Mammary epithelial cell (primary cell): ENCODE measurements at regions of chr7 and their contacts with region 1.

Region 1: DNA sequence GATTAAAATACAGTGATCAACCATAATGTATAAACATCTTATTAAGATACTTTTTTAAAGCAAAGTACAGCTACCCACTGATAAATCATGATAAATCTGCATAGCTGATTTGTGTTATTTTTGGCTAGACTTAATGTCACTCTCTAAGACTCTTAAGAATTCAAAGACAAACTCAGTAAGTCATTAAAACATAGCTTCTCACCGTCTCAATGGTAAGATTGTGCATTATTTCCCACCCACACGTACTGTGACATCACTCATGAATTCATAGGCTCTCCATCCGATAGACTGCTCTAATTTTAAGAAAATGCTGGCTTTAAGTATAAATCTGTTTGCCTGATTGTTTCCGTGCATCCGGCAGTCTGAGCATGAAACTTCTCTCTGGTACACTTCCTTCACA is 266.1 kb downstream of the GLI3 start:
- DNase-seq: no peak
- H3K4me3 ChIP-seq: no peak overlapping the region
- H3K27ac ChIP-seq: no peak overlapping the region
- H3K4me1 ChIP-seq: peaks cover 6% of the 10 kb centered on the region
- H3K27me3 ChIP-seq: no peaks in the 10 kb centered on the region
- CTCF ChIP-seq: no peak

Region 2: DNA sequence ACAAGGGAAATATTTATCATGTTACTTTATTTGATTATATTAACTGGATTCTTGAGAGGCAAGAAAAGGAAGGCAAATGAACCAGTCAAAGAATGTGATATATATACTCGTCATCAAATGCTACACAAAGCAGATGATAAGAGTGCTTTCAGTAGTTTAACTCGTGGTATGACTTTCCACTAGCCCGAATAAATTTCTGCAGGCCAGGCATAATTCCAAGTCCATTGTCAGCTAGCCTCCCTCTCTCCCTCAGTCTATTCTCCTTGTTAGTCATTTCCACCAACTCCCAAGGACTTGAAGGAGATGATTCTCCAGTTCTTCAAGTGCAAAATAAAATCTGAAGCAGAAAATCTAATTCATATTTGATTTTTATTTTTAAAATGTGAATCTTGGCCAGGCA is 75.5 kb after region 1 on chr7:
- CTCF ChIA-PET with region 1: interaction called, 10 read pairs
- dilution Hi-C with region 1: no loop called
- in situ Hi-C with region 1: no loop called
- intact Hi-C with region 1: no loop called
- DNase-seq: no peak
- H3K4me3 ChIP-seq: no peak overlapping the region
- H3K27ac ChIP-seq: no peak overlapping the region
- H3K4me1 ChIP-seq: no peaks in the 10 kb centered on the region
- H3K27me3 ChIP-seq: no peaks in the 10 kb centered on the region
- CTCF ChIP-seq: no peak